Activated CD4-positive, alpha-beta memory T cell treated with anti-CD3 and anti-CD28 coated beads, Interleukin-2, amount 10 ng/mL, durations not matched to agents 7 days and 5 days (primary cell): ENCODE measurements at regions of chr11 and their contacts with region 1.

Region 1: GRCh38 chr11:64204464-64204989 is 2.0 kb upstream of the FERMT3 start:
- DNase-seq: peak; percentile 84
- H3K4me3 Mint-ChIP-seq: peak overlapping the region; percentile 48
- H3K27ac Mint-ChIP-seq: peak overlapping the region; percentile 81
- H3K4me1 Mint-ChIP-seq: peaks cover 52% of the 10 kb centered on the region
- H3K27me3 Mint-ChIP-seq: no peaks in the 10 kb centered on the region

Region 2: DNA sequence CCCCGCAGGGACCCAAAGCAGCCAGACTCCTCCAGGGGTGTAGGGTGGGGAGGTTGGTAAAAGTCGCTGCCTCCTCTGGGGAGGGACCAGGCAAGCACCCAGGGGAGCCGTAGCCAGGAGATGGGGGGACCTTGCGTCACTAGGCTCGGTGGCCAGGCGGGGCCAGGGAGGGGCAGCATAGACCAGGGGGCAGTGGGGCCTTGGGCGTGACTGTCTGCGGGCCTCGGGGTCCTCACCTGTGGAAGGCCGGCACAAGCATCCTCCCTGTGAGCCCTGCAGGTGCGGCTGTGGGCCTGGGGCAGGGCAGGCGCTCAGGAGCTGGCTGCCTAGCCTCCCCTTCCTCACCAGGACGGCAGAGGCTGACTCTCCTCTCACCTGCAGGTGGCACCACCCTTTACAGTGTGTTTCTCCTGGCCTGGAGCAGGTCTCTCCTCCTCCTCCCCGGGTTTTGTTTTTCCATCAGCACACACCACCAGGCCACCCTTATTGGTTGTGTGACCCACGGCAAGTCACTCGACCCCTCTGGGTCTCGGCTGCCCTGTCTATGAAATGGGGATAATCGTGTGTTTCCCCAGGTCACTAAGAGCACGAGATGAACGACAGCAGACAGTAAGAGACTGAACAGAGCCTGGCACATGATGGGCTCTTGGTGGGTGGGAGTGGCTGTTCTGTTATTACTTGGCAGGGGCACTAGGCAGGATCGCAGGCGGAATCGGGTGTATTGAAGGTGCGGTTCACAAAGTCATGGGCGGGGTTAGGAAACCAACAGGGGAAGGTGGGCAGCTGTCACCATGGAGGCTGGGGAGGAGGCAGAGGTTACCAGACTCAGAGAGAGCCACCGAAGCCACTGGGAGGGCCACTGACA is 116.1 kb before region 1 on chr11:
- CTCF ChIA-PET with region 1: no interaction called
- POLR2A ChIA-PET with region 1: no interaction called
- DNase-seq: peak; percentile 17
- H3K4me3 Mint-ChIP-seq: no peak overlapping the region
- H3K27ac Mint-ChIP-seq: no peak overlapping the region
- H3K4me1 Mint-ChIP-seq: peaks cover 17% of the 10 kb centered on the region
- H3K27me3 Mint-ChIP-seq: no peaks in the 10 kb centered on the region

Region 3: GRCh38 chr11:64141081-64141783 is 63.3 kb before region 1 on chr11:
- CTCF ChIA-PET with region 1: no interaction called
- POLR2A ChIA-PET with region 1: no interaction called
- DNase-seq: no peak
- H3K4me3 Mint-ChIP-seq: no peak overlapping the region
- H3K27ac Mint-ChIP-seq: no peak overlapping the region
- H3K4me1 Mint-ChIP-seq: peaks cover 12% of the 10 kb centered on the region
- H3K27me3 Mint-ChIP-seq: no peaks in the 10 kb centered on the region

Region 4: GRCh38 chr11:64216879-64217278 is 12.4 kb after region 1 on chr11:
- CTCF ChIA-PET with region 1: interaction called, 13 read pairs
- POLR2A ChIA-PET with region 1: interaction called, 275 read pairs
- DNase-seq: no peak
- H3K4me3 Mint-ChIP-seq: no peak overlapping the region
- H3K27ac Mint-ChIP-seq: no peak overlapping the region
- H3K4me1 Mint-ChIP-seq: peaks cover 13% of the 10 kb centered on the region
- H3K27me3 Mint-ChIP-seq: no peaks in the 10 kb centered on the region

Region 5: DNA sequence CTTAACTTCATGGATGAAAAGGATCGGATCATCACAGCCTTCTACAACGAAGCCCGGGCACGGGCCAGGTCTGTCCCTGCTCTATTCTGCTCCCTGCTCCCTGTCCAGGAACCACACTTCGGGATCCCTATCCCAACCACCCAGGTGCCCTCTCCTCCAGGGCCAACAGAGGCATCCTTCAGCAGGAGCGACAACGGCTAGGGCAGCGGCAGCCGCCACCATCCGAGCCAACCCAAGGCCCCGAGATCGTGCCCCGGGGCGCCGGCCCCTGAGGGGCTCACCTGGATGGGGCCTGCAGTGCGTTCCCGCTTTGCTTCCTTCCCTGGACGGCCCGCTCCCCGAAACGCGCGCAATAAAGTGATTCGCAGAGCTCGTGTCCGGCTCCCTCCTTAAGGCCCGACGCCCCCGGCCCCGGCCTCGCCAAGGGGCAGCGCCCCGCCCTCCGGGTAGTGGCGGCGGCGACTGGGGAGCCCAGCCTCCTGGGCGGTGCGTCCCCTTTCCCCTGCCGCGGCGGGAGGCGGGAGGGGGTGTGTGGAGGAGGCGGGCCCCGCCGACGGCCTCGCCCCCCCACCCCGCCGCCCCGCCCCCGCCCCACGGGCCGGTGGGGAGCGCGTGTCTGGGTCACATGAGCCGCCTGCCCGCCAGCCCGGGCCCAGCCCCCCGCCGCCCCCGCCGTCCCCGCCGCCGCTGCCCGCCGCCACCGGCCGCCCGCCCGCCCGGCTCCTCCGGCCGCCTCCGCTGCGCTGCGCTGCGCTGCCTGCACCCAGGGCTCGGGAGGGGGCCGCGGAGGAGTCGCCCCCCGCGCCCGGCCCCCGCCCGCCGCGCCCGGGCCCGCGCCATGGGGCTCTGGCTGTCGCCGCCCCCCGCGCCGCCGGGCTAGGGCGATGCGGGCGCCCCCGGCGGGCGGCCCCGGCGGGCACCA is 29.6 kb after region 1 on chr11 and contains the start of gene VEGFB:
- CTCF ChIA-PET with region 1: interaction called, 40 read pairs
- POLR2A ChIA-PET with region 1: interaction called, 19 read pairs
- DNase-seq: peak; percentile 79
- H3K4me3 Mint-ChIP-seq: peak within 1 kb of the TSS; percentile 83
- H3K27ac Mint-ChIP-seq: peak within 1 kb of the TSS; percentile 26
- H3K4me1 Mint-ChIP-seq: peaks cover 45% of the 10 kb centered on the region
- H3K27me3 Mint-ChIP-seq: no peaks in the 10 kb centered on the region
- total RNA-seq, gene VEGFB: 49.1 to 58.5 TPM

Region 6: GRCh38 chr11:64246871-64247728 is 42.6 kb after region 1 on chr11 and contains the start of gene PPP1R14B:
- CTCF ChIA-PET with region 1: interaction called, 34 read pairs
- POLR2A ChIA-PET with region 1: interaction called, 107 read pairs
- DNase-seq: peak; percentile 84
- H3K4me3 Mint-ChIP-seq: peak within 1 kb of the TSS; percentile 86
- H3K27ac Mint-ChIP-seq: peak within 1 kb of the TSS; percentile 85
- H3K4me1 Mint-ChIP-seq: peaks cover 53% of the 10 kb centered on the region
- H3K27me3 Mint-ChIP-seq: peaks cover 3% of the 10 kb centered on the region
- total RNA-seq, gene PPP1R14B: 96.9 to 105 TPM

Region 7: DNA sequence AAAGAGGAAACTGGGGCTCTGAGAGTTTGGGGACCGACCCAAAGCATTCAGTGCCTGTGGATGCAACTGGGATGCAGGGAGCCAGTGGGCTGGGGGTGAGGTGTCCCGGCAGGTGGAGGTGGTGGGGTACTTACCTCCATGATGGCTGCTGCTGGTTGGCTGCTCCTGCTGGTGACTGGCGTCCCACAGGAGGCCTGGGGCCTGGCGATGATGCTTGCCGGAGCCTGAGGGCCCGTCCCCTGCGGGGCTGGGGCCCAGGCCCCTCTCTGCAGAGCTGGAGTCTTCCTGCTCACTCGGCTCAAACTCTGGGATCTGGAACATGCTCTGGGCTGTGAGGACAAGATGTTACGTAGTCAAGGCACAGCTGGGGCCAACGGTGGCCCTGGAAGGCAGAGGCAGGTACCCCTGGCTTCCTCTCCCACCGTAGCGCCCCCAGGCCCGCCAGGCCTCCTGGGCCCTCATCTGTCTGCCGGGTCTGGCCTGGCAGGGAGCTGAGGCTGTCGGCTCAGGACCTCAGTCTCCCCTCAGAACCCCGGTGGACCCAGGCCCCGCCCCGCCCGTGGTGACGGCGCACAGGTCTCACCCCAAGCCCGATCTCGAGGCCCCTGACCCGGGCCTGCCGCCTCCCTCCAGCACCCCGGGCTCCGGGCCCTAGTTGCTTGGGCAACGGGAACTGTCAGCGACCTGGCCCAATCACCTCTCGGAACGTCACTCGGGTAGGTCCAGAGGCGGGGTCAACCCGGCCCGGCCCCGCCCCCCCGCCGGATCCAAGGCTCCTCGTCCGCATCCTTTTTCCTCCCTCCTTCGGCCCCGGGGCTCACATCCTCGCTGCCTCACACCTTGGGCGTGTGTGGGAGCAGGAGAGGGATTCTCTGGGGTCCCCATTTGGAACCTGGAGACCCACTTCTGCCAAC is 79.8 kb after region 1 on chr11 and contains the start of gene BAD:
- CTCF ChIA-PET with region 1: interaction called, 27 read pairs
- POLR2A ChIA-PET with region 1: interaction called, 23 read pairs
- DNase-seq: peak; percentile 95
- H3K4me3 Mint-ChIP-seq: peak within 1 kb of the TSS; percentile 83
- H3K27ac Mint-ChIP-seq: peak within 1 kb of the TSS; percentile 82
- H3K4me1 Mint-ChIP-seq: peaks cover 28% of the 10 kb centered on the region
- H3K27me3 Mint-ChIP-seq: no peaks in the 10 kb centered on the region
- total RNA-seq, gene BAD: 36.5 to 39.2 TPM

Region 8: DNA sequence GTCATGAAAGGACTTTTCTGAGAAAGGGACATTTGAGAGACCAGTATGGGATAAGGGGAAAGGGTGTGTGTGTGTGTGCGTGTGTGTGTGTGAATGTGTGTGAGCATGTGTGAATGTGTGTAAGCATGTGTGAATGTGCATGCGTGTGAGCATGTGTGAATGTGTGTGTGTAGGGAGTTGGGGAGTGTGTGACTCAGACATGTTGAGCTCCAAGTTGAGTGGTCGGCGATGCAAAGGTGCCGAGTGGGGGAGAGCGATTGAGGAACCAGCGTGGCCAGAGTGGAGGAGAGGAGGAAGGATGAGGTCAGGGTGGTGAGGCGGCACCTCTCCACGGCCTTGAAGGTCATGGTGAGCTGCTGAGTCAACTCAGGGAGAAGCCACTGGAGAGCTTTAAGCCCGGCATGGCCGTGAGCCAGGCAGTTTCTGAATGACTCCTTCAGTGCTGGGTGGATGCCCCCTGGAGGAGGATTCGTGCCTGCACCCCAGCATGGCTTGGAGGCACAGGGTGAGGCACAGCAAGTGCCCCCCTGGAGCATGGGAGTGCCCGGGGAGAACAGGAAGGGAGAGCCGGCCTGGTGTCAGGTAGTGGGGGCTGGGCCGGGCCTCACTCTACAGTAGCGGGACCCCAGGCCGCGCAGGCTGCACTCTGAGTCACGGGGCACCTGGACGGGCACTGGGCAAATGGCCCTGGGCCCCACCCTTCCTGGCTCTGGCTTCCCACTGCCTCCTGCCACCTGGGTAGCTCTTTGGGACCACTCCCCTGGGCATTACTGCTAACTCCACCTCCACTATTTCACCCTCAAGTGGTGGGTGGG is 127.2 kb after region 1 on chr11:
- CTCF ChIA-PET with region 1: interaction called, 8 read pairs
- POLR2A ChIA-PET with region 1: interaction called, 12 read pairs
- DNase-seq: peak; percentile 89
- H3K4me3 Mint-ChIP-seq: peak overlapping the region; percentile 45
- H3K27ac Mint-ChIP-seq: peak overlapping the region; percentile 83
- H3K4me1 Mint-ChIP-seq: peaks cover 44% of the 10 kb centered on the region
- H3K27me3 Mint-ChIP-seq: no peaks in the 10 kb centered on the region